Right lobe of liver (tissue), 6 donors: ENCODE measurements at regions of chr17 and their contacts with region 1.

Region 1: GRCh38 chr17:76279742-76280287 is 14.7 kb downstream of the UBALD2 start:
- DNase-seq: peak in 1 of 3 donors; percentile 57
- ATAC-seq: no peak
- H3K4me3 ChIP-seq: no peak overlapping the region
- H3K27ac ChIP-seq: no peak overlapping the region
- H3K4me1 ChIP-seq: no peaks in the 10 kb centered on the region
- H3K27me3 ChIP-seq: no peaks in the 10 kb centered on the region
- CTCF ChIP-seq: no peak
- POLR2A ChIP-seq: no peak

Region 2: DNA sequence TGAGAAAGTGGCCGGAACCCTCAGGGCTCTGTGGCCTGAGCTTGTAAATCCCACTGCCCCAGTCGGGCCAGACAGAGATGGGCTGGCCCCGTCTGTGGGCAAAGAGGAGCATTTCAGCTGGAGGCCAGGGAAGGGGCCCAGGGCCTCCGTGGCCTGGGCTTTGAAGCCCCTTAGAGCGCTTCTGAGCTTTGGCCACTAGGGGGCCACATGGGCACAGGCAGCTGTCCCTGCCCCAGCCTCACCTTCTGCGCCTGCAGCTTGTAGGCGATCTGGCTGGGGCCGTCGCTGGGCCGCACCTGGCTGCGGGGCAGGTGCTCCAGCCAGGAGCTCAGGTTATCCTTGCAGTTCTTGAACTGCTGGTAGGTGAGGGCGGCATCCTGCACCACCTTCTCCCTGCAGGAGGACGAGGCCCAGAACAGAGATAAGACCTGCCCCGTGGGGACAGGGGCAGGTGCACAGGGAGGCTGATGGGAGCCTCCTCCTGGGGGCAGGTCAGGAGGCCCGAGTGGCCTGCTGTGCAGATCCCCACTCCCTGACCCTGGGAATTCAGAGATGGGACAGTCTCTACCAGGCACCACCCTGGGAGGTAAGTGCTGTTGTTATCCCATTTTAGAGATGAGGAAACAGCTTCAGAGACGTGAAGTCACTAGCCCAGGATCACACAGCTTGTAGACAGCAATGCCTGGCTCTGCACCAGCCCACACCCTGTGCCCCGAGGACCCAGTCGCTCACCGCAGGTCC is 265.5 kb before region 1 on chr17:
- intact Hi-C with region 1: loop called in 1 of 2 experiments (anchors 10 kb)
- DNase-seq: peak; percentile 75 to 81 (median 78)
- ATAC-seq: peak; percentile 84 to 94 (median 92)
- H3K4me3 ChIP-seq: no peak overlapping the region
- H3K27ac ChIP-seq: no peak overlapping the region
- H3K4me1 ChIP-seq: no peaks in the 10 kb centered on the region
- H3K27me3 ChIP-seq: no peaks in the 10 kb centered on the region
- CTCF ChIP-seq: peak; percentile 90 to 98 (median 97)
- POLR2A ChIP-seq: no peak

Region 3: GRCh38 chr17:76191896-76192295 is 87.9 kb before region 1 on chr17:
- intact Hi-C with region 1: no loop called
- DNase-seq: no peak
- ATAC-seq: peak in 1 of 4 donors; percentile 19
- H3K4me3 ChIP-seq: no peak overlapping the region
- H3K27ac ChIP-seq: no peak overlapping the region
- H3K4me1 ChIP-seq: peaks cover 0 to 15% (median 6%) of the 10 kb centered on the region in 4 donors
- H3K27me3 ChIP-seq: no peaks in the 10 kb centered on the region
- CTCF ChIP-seq: no peak
- POLR2A ChIP-seq: no peak